ENCODE measurements at regions of chr12 and their contacts with region 1.

Region 1: DNA sequence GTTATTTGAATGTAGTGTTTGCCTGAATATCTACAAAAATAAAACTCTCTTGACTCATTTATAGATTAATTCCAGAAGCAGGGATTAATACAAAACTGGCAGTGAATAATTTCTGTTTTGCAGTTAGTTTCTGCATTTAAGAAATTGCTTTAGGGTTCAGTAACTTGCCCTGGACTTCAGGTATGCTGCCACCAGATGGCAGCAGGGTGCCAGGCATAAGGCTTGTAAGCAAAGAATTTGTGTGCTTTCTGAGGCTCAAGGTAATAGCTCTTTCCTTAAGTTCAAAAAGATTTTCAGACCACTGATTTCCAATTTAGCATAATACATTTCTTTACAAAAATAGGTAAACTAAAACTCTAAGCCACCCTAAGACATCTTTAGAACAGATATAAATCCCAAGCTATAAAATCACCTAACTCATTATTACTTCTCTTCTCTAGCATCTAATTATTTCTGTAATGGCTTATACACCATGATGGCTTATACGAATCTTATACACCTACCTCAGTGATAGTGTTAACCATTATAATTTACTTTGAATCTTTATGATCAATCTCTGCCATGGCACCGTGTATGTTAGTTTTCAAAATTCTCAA is 398.3 kb downstream of the APAF1 start:
- DNase-seq: peak; percentile 28
- ATAC-seq: peak; percentile 82
- H3K4me3 ChIP-seq: no peak overlapping the region
- H3K27ac ChIP-seq: no peak overlapping the region
- H3K4me1 ChIP-seq: no peaks in the 10 kb centered on the region
- H3K27me3 ChIP-seq: peaks cover 0 to 3% of the 10 kb centered on the region in 2 experiments; a peak in 1 of 4 replicates
- CTCF ChIP-seq: peak; percentile 84 to 88 (median 86)
- EP300 ChIP-seq: no peak
- POLR2A ChIP-seq: no peak
- RAD21 ChIP-seq: peak; percentile 97

Region 2: DNA sequence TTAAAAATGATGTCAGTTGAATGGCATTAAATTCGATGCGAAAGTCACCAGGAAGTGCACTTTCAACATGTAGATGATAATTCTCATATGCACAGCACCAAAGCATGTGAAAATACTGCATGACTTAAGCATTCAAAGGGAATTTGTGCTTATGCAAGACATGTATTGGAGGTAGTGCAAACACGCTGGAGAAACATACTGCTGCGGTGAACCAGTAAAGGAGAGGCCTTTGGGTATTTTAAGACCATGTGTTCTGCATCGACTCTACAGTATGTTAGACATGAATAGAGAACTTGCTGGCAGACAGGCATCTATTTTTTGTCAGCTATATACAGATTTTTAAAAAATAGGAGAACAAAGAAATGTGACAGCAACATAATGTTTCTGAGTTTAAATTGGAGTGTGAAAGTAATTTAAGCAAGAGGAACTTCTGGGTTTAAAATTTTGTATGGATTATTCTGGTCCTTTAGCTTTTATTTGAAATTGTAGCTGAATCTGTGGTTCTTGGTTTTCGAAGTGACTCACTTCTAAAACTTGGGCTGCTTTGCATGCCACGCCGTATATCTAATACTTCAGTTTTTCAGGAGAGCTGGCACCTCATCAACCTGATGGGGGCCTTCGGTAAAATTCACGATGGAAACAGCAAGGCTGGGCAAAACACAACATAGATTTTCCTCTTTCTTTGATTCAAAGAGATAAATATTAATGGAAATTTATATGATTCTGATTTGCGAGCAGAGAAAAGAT is 10.4 kb after region 1 on chr12:
- CTCF ChIA-PET with region 1: interaction called, 35 read pairs
- POLR2A ChIA-PET with region 1: no interaction called
- RAD21 ChIA-PET with region 1: no interaction called
- SMC1A ChIA-PET with region 1: interaction called, 19 read pairs
- in situ Hi-C with region 1: no loop called
- intact Hi-C with region 1: no loop called
- DNase-seq: no peak
- ATAC-seq: no peak
- H3K4me3 ChIP-seq: no peak overlapping the region
- H3K27ac ChIP-seq: no peak overlapping the region
- H3K4me1 ChIP-seq: no peaks in the 10 kb centered on the region
- H3K27me3 ChIP-seq: no peaks in the 10 kb centered on the region
- CTCF ChIP-seq: no peak
- EP300 ChIP-seq: no peak
- POLR2A ChIP-seq: no peak
- RAD21 ChIP-seq: no peak

Region 3: GRCh38 chr12:99253068-99253467 is 209.7 kb after region 1 on chr12:
- CTCF ChIA-PET with region 1: no interaction called
- POLR2A ChIA-PET with region 1: no interaction called
- RAD21 ChIA-PET with region 1: no interaction called
- SMC1A ChIA-PET with region 1: no interaction called
- in situ Hi-C with region 1: no loop called
- intact Hi-C with region 1: loop called (anchors 10 kb)
- DNase-seq: no peak
- ATAC-seq: peak; percentile 76
- H3K4me3 ChIP-seq: no peak overlapping the region
- H3K27ac ChIP-seq: no peak overlapping the region
- H3K4me1 ChIP-seq: no peaks in the 10 kb centered on the region
- H3K27me3 ChIP-seq: no peaks in the 10 kb centered on the region
- CTCF ChIP-seq: peak; percentile 25 to 40 (median 29); a peak in 5 of 6 replicates
- EP300 ChIP-seq: no peak
- POLR2A ChIP-seq: no peak
- RAD21 ChIP-seq: peak; percentile 52

Region 4: DNA sequence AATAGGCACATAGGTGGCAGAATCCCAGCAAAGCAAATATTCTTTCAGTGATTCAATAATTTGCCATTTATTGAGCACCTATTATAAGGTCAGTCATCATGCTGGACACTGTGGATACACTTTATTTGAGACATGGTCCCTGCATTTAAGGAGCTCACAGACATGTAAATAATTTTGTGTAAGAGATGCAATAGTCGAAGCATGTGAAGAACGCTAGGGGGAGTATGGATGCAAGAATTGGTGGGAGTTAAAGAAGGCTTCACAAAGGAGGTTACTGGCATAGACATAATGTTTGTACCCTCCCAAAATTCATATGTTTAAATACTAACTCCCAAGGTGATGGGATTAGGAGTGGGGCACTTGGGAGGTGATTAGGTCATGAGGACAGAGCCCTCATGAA is 343.5 kb after region 1 on chr12:
- CTCF ChIA-PET with region 1: interaction called, 13 read pairs
- POLR2A ChIA-PET with region 1: no interaction called
- RAD21 ChIA-PET with region 1: interaction called, 4 read pairs
- SMC1A ChIA-PET with region 1: interaction called, 14 read pairs
- in situ Hi-C with region 1: no loop called
- intact Hi-C with region 1: loop called (anchors 2 kb)
- DNase-seq: no peak
- ATAC-seq: peak; percentile 45
- H3K4me3 ChIP-seq: no peak overlapping the region
- H3K27ac ChIP-seq: no peak overlapping the region
- H3K4me1 ChIP-seq: no peaks in the 10 kb centered on the region
- H3K27me3 ChIP-seq: no peaks in the 10 kb centered on the region
- CTCF ChIP-seq: peak; percentile 42 to 56 (median 51); a peak in 5 of 6 replicates
- EP300 ChIP-seq: no peak
- POLR2A ChIP-seq: no peak
- RAD21 ChIP-seq: peak; percentile 75

Region 5: GRCh38 chr12:99658671-99659349 is 615.4 kb after region 1 on chr12:
- CTCF ChIA-PET with region 1: interaction called, 50 read pairs
- POLR2A ChIA-PET with region 1: no interaction called
- RAD21 ChIA-PET with region 1: interaction called, 23 read pairs
- SMC1A ChIA-PET with region 1: interaction called, 26 read pairs
- in situ Hi-C with region 1: loop called (anchors 10 kb)
- intact Hi-C with region 1: loop called (anchors 1 kb)
- DNase-seq: no peak
- ATAC-seq: no peak
- H3K4me3 ChIP-seq: no peak overlapping the region
- H3K27ac ChIP-seq: no peak overlapping the region
- H3K4me1 ChIP-seq: no peaks in the 10 kb centered on the region
- H3K27me3 ChIP-seq: no peaks in the 10 kb centered on the region
- CTCF ChIP-seq: peak in 1 of 3 experiments; percentile 16; a peak in 2 of 6 replicates
- EP300 ChIP-seq: no peak
- POLR2A ChIP-seq: no peak
- RAD21 ChIP-seq: peak; percentile 59